Transverse colon (tissue), 4 donors: ENCODE measurements at regions of chr12 and their contacts with region 1.

Region 1: DNA sequence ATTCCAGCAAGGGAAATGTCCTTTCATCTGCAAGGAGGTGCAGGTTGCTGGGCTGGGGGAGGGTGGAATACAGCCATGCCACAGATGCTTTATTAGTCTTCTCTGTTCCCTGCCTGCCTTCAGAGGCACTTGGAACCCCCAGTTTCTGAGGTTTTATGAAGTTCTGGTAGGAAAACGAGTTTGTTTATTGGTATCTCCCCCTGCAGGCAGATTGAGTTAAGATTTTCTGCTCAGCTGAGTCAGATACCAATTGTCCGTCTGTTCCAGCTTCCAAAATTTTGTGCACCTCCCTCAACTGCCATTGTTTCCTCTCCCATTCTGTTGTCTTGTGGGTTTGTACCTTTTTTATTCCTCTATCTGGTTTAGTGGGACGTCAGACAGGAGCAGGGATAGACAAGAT is 155.6 kb downstream of the ETV6 start:
- DNase-seq: no peak
- H3K4me3 ChIP-seq: no peak overlapping the region
- H3K27ac ChIP-seq: peak overlapping the region; percentile 7 to 67 (median 62)
- H3K4me1 ChIP-seq: peaks cover 4 to 33% (median 14%) of the 10 kb centered on the region in 4 donors
- H3K27me3 ChIP-seq: no peaks in the 10 kb centered on the region
- CTCF ChIP-seq: peak in 1 of 5 experiments; percentile 33
- EP300 ChIP-seq: no peak
- POLR2A ChIP-seq: no peak

Region 2: GRCh38 chr12:11711651-11712327 is 93.3 kb before region 1 on chr12:
- in situ Hi-C with region 1: no loop called
- intact Hi-C with region 1: no loop called
- DNase-seq: no peak
- H3K4me3 ChIP-seq: no peak overlapping the region
- H3K27ac ChIP-seq: peak overlapping the region in 3 of 4 donors; percentile 13 to 41 (median 33)
- H3K4me1 ChIP-seq: peaks cover 17 to 51% (median 23%) of the 10 kb centered on the region in 4 donors
- H3K27me3 ChIP-seq: no peaks in the 10 kb centered on the region
- CTCF ChIP-seq: no peak
- EP300 ChIP-seq: no peak
- POLR2A ChIP-seq: no peak

Region 3: DNA sequence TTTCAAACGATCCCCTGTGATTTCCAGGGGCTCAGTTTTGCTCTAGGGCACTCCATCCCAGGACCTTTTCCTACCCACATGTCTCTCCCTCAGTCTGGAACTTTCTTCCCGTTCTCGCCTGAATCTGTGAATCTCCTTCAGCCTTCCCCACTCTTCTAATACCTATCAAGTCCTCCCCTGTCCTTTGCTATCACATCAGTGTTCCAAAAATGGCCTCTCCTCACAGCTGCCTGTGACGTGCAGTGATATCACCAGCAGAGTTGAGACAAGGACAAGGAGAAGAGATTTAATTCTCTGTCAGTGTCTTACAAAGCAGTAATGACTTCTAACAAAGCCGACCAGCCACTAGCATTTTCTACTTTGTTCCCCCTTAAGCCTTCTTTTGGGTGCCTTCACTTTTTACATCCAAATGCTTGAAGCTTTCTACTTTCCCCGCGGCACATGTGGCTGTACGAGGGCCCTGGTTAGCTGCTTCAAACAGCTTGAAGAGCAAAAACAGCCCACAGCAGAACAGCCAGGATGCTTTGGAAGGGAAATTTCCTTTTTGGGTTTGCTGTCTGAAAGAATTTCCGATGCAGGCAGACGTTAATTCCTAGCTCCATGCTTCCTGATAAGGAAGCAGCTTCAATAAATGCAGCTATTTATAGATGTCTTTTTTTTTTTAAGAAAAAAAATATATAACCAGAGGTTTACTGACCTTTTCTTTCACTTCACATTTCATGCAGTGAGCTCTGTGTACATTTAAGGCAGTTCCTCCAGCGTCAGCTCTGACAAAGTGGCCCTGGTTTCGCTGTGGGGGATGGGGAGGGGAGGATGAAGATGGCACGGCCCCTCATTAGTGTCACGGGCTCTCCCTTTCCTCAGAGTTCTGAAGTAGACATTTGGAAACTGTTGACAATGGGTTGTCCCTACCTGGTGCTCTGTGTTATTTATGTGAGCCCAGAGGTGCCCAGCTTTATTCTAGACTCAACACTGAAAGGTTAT is 46.2 kb before region 1 on chr12:
- in situ Hi-C with region 1: no loop called
- intact Hi-C with region 1: loop called (anchors 10 kb)
- DNase-seq: peak; percentile 72
- H3K4me3 ChIP-seq: no peak overlapping the region
- H3K27ac ChIP-seq: peak overlapping the region; percentile 74 to 87 (median 82)
- H3K4me1 ChIP-seq: peaks cover 33 to 85% (median 60%) of the 10 kb centered on the region in 4 donors
- H3K27me3 ChIP-seq: no peaks in the 10 kb centered on the region
- CTCF ChIP-seq: no peak
- EP300 ChIP-seq: no peak
- POLR2A ChIP-seq: no peak

Region 4: DNA sequence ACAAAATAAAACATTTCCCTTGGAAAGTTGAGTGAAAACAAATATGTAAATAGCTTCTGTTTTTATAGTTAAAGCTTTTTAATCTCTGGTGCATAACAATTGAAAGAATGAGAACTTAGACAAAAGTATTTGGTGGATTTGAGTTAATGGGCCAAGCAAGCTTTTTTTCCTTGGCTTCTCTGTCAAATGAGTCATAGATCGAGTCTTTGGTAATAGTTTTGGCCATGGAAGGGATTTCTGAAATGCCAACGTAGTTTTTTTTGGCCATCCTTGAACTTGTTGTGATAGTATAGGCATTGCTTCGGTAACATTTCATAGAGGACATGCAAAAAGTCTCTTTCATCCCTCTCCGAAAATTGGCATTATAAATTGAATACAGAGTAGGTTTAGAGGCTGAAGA is 856.0 kb after region 1 on chr12:
- in situ Hi-C with region 1: no loop called
- intact Hi-C with region 1: loop called (anchors 5 kb)
- DNase-seq: no peak
- H3K4me3 ChIP-seq: no peak overlapping the region
- H3K27ac ChIP-seq: no peak overlapping the region
- H3K4me1 ChIP-seq: peaks cover 0 to 1% (median 0%) of the 10 kb centered on the region in 4 donors
- H3K27me3 ChIP-seq: no peaks in the 10 kb centered on the region
- CTCF ChIP-seq: no peak
- EP300 ChIP-seq: no peak
- POLR2A ChIP-seq: no peak